ENCODE measurements at regions of chr1 and their contacts with region 1.

Region 1: DNA sequence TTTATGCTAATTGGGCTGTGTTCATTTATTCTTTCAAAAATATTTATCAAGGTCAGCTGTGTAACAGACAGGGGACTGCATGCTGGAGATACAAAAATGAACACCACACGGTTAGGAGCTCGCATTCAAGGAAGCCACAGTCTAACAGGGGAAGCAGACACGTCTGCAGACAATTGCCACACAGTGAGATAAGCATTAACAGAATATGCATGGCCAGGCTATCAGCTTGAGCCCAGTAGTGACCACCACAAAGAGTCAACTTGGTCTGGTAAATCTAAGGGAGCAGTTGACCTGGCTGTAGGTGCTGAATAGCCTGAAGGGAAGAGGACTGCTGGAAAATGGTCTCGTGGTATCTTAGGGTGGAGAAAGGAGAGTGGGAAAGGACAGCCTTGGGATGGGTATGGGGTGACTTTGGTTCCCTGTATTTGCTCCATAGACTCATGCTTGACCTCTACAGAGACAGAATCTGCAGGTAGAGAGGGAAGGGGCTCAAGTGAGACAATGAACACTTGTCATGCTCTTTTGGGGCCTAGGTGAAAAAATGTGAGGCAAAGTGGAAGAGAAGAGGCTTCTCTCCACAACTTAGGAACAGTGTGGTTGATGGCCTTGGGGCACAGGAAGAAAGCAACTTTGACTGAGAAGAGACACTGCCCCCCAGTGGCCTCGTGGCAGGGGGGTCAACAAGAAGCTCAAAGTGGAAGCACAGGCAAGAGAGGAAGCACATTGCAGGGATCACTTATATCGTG is 7.6 kb upstream of the NPL start:
- DNase-seq: no peak
- H3K4me3 ChIP-seq: no peak overlapping the region
- H3K27me3 ChIP-seq: no peaks in the 10 kb centered on the region; the same call in 1 of the 2 replicates
- CTCF ChIP-seq: peak; percentile 74

Region 2: GRCh38 chr1:182614796-182615454 is 167.1 kb before region 1 on chr1:
- CTCF ChIA-PET with region 1: interaction called, 34 read pairs
- POLR2A ChIA-PET with region 1: no interaction called
- DNase-seq: peak; percentile 73
- H3K4me3 ChIP-seq: peak overlapping the region; percentile 34
- H3K27me3 ChIP-seq: peaks cover 3% of the 10 kb centered on the region; the same call in 1 of the 2 replicates
- CTCF ChIP-seq: no peak

Region 3: DNA sequence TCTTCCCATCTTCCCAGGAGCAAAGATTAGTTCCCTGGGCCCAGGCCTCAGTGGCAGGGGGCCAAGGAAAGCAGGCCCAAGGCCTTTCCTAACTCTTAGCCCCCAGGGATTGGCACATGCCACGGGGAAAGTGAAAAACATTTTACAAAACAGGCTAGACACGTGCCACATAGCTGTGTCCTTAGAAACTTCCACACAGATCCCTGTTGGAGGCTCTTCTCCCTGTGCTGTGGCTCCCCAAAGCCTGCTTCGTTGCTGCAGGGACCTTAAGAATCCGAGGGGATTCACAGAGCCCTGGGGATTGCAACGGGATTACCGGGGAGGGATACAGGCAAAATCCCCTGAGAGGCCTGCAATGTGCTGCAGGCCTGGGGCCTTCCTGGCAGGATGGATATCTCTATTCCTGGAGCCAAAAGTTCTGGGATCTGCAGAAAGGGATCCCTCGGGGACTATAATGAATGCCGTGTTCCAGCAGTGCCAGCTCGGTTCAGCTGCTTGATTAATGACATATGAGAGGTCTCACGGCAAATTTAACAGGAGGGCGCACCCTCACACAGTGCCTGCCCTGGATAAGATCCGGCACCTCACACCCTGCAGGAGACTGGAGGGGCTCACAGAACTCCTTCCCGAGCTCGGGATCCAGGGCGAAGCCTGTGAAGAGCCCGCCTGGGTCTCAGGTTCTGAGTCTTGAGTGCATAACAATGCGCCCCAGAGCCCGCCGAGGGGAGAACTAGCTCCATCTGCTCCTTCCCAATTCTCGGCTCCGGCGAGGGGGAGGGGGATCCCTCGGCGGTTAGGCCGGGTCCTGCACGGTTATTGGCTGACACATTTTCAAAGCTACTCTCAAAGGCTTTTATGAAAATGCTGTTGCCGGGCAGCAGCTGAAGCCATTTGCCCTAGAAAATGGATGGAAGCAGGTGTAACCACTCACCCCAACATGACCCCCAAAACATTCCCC is 82.3 kb before region 1 on chr1:
- CTCF ChIA-PET with region 1: no interaction called
- POLR2A ChIA-PET with region 1: no interaction called
- DNase-seq: no peak
- H3K4me3 ChIP-seq: no peak overlapping the region
- H3K27me3 ChIP-seq: peaks cover 3% of the 10 kb centered on the region; the same call in 1 of the 2 replicates
- CTCF ChIP-seq: no peak

Region 4: GRCh38 chr1:182740120-182740519 is 41.9 kb before region 1 on chr1:
- CTCF ChIA-PET with region 1: no interaction called
- POLR2A ChIA-PET with region 1: no interaction called
- DNase-seq: no peak
- H3K4me3 ChIP-seq: no peak overlapping the region
- H3K27me3 ChIP-seq: no peaks in the 10 kb centered on the region
- CTCF ChIP-seq: no peak

Region 5: DNA sequence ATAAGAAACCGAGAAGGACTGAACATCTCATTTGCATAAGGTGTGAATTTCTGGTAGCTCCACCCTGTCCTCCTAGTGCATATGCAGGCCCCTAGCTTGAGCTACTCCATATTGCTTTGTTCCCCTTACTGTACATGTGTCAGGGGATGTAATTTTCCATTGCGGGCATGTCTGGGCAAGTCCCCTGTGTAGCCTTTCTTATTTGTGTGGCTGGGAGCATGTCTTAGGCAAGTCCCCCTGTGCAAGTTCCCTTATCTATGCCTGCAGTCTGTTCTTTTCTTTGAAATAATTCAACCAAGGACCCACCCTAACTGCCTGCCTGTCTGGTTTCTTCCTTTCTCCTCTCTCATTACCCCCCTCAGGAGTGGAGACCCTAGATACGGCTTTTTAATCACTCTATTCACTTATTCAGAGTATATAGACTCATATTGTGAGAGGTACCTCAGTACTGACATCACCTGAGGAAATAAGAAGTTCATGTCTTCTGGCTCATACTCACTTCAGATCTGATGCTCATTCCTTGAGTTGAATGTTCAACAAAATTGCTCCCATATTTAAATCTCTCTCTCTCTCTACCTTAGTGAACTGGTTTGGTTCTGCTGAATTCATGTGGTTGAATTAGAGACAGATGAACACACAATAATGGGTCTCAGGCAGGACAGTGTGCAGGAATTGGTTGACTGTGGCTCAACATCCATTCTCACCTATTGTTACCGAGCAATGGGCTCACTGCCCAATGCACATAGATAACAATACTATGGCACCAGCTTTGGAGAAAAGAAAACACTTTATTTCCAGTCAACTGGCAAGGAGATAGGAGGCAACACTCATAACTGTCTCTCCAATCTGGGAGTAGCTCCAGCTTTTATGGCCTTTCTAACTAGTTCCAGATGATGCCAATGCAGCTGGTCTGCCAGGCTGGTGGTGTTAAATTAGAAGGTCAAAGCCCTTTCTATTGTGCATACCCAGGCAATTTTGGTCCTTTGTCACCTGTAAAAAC is 20.3 kb before region 1 on chr1:
- CTCF ChIA-PET with region 1: interaction called, 13 read pairs
- POLR2A ChIA-PET with region 1: no interaction called
- DNase-seq: no peak
- H3K4me3 ChIP-seq: no peak overlapping the region
- H3K27me3 ChIP-seq: peaks cover 2% of the 10 kb centered on the region; the same call in 1 of the 2 replicates
- CTCF ChIP-seq: no peak

Region 6: DNA sequence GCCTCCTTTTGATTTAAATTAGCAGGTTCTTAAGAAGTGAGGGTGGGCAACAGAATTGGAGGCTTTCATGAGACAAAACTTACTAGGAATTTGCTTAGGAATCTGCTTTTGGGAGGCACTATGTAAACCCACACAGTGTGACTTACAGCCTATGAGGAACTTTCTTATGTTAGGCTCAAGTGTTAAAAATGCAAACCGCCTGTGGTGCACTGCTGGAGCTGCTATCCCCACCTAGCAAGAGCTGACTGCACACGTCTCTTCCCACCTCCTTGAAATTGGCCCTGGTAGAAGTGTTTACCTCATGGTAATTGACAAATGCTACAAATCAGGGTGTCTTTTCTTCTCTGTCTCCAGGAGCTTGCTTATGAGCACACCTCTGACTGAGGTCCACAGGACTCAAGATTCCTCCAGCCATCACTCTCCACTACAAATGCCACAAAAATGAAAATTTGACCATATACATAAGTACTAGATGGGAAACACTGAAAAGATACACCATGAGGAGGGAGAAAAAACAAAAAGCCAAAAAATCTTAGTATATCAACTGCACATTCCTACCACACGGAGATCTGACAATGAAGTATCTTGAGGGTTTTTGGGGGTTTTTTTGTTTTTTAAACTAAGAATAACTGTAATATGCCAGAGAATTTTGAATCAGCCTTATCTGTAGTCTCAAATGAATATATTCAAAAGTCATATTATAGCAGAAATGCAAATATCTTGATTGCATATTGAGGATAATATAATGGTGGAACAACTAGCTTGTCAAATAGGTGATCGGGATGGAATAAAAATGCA is 10.6 kb before region 1 on chr1:
- CTCF ChIA-PET with region 1: interaction called, 11 read pairs
- POLR2A ChIA-PET with region 1: no interaction called
- DNase-seq: no peak
- H3K4me3 ChIP-seq: no peak overlapping the region
- H3K27me3 ChIP-seq: peaks cover 3% of the 10 kb centered on the region
- CTCF ChIP-seq: peak; percentile 30

Measured in BJ (cell line).